GM10248 (cell line): ENCODE measurements at regions of chr1 and their contacts with region 1.

Region 1: DNA sequence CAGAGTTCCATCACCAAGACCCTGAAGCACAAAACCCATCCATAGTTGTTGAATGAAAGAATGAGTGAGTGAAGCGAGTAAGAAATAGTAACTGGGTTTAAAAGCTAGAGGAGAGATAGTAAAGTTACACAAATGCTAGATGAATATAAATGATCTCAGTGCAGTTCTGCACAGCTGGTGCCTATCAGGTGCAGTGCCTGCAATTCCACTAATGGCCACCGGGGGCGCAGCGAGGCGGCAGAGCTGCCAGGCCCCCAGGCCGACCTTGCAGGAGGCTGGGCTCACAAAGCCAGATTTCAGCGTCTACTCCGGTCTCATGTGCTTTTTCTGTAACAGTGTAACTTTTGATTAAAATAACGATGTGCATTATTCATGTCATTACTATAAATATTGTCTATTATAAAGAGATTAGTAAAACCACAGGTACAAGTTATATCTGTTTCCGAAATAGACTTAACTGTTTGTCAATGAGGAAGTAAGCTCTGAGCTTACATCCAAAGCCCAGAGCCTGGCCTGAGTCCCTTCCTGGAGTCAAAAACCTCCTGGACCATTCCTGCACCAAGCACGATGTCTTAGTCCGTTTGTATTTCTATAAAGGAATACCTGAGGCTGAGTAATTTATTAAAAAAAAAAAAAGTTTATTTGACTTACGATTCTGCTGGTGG is 477.6 kb downstream of the NPHP4 start:
- DNase-seq: peak; percentile 86
- CTCF ChIP-seq: peak; percentile 98

Region 2: DNA sequence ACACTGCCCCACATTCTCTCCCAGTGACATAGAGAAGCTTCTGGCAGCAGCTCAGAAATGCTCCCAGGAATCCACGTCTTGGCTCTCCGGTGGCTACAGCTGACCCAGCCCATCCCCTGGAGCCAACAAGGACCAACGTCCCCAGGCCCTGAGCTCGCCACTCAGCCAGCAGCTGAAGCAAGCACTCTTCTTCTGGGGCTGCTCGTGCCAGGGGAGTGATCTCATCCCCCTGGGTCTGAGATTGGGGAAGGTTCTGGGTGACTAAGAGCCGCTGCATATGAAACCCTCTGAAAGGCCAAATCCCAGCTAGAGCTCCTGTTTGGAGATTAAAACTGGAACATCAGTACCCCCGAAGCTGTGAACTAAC is 10.3 kb before region 1 on chr1:
- CTCF ChIA-PET with region 1: interaction called, 19 read pairs
- POLR2A ChIA-PET with region 1: no interaction called
- DNase-seq: no peak
- CTCF ChIP-seq: no peak

Region 3: GRCh38 chr1:5525597-5526384 is 11.1 kb after region 1 on chr1:
- CTCF ChIA-PET with region 1: interaction called, 24 read pairs
- POLR2A ChIA-PET with region 1: no interaction called
- DNase-seq: no peak
- CTCF ChIP-seq: no peak

Region 4: GRCh38 chr1:5745776-5746610 is 231.3 kb after region 1 on chr1:
- CTCF ChIA-PET with region 1: interaction called, 21 read pairs
- POLR2A ChIA-PET with region 1: no interaction called
- DNase-seq: peak; percentile 88
- CTCF ChIP-seq: peak; percentile 97

Region 5: DNA sequence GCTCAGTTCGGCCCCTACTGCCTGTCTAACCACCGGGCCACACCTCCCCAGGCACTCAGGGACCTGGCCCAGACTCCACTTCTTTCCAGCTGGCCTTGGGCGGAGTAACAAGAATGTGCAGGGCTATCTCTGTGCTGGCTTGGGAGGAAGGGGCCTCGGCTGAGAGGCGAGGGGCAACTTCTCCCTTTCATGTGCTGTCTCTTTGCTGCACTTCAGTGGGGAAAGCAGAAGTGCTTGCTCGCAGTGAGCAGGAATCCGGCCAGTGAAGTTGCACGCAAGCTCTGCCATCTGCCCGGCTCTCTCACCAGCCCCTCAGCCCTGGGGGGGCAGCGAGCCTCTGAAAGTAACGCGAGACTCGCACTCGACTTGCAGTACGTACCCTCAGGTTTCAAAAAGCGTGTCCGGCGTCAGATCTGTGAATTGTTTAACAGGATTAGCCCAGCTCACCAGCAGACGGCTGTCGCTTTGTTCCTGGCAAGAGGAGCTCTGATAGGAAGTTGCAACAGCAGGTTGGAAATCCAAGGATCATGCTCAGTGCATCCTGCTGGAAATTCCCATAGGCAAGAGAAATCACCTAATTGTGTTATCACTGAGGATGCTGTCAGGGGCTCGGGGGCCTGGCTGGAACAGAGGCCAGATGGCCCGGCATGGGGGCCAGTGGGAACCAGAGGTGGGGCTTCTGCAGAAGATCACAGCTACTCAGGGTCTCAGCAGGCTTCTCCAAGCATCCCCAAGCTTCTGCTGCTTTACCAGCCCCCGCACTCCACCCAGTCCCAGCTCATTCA is 256.5 kb after region 1 on chr1:
- CTCF ChIA-PET with region 1: no interaction called
- POLR2A ChIA-PET with region 1: no interaction called
- DNase-seq: no peak
- CTCF ChIP-seq: no peak

Region 6: GRCh38 chr1:5915587-5916571 is 401.2 kb after region 1 on chr1:
- CTCF ChIA-PET with region 1: interaction called, 69 read pairs
- POLR2A ChIA-PET with region 1: no interaction called
- DNase-seq: peak; percentile 74
- CTCF ChIP-seq: peak; percentile 60

Region 7: GRCh38 chr1:5975133-5975880 is 460.7 kb after region 1 on chr1:
- CTCF ChIA-PET with region 1: interaction called, 15 read pairs
- POLR2A ChIA-PET with region 1: no interaction called
- DNase-seq: peak; percentile 47
- CTCF ChIP-seq: peak; percentile 54